Common myeloid progenitor, CD34-positive (primary cell): ENCODE measurements at regions of chr15 and their contacts with region 1.

Region 1: DNA sequence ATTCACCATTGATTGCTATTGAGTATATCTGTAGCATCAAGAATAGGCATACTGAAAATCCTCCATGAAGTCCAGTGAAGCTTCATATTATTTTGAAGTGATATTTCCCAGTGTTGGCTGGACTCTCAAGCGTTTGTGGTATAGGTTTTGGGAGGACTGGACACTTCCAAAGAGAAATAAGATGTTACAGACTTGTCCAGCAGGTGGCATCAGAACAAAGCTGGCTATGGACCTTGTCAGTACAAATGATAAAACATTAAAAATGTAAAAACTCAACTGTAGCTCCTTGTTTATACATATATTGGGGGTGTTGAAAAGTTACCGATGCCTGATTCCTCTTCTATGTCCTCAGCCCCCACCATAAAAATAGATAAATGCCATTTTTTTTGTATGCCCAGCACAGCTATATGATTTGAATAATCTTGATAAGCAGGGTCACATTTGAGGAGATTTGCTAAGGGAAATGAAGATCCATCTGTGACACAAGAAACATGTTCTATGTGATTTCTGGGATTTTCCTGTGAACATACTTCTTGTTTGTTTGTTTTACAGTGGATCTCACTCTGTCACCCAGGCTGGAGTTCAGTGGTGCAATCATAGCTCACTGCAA is 54.5 kb upstream of the GOLGA6B start:
- DNase-seq: peak; percentile 44 to 64 (median 50)
- H3K4me3 ChIP-seq: no peak overlapping the region
- H3K27ac ChIP-seq: no peak overlapping the region
- H3K4me1 ChIP-seq: no peaks in the 10 kb centered on the region
- H3K27me3 ChIP-seq: peaks cover 0 to 2% (median 0%) of the 10 kb centered on the region in 5 experiments

Region 2: DNA sequence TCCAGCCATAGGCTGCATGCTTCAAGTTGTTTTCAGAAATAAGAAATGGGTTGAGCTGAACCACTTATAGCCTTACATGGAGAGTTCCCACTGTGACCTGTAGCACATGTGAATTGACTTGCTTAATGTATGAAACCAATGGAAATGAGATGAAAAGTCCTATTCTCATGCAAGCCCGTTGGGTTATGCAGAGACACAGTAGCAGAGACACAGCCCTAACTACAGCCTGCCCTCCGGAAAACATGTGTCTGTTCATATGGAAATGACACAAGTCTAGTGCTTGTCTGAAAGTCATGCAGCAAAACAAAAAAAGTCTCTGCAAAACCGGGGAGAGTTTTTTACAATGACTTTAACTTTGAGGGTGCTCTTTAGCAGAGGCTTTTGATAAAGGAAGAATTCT is 71.6 kb after region 1 on chr15:
- CTCF ChIA-PET with region 1: interaction called, 10 read pairs
- POLR2A ChIA-PET with region 1: no interaction called
- DNase-seq: no peak
- H3K4me3 ChIP-seq: no peak overlapping the region
- H3K27ac ChIP-seq: no peak overlapping the region
- H3K4me1 ChIP-seq: peaks cover 0 to 11% (median 4%) of the 10 kb centered on the region in 4 experiments
- H3K27me3 ChIP-seq: peaks cover 0 to 7% (median 0%) of the 10 kb centered on the region in 5 experiments

Region 3: DNA sequence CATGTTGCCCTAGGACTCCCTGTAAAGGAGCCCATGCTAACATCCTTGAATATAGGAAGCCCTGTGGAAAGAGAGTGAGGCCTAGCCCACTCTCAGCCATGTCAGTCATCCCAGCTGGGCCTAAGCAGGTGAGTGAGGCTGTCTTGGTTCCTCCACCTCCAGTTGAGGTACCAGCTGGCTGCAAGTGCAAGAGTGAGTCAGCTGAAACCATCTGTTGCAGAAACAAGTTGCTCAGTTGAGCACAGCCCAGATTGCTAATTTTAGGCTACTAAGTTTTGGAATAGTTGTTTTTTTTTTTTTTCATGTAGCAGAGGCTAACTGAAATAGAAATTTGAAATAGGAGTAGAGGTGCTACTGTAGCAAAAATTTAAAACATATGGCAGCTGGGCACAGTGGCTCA is 227.3 kb after region 1 on chr15:
- CTCF ChIA-PET with region 1: no interaction called
- POLR2A ChIA-PET with region 1: no interaction called
- DNase-seq: no peak
- H3K4me3 ChIP-seq: no peak overlapping the region
- H3K27ac ChIP-seq: no peak overlapping the region
- H3K4me1 ChIP-seq: no peaks in the 10 kb centered on the region
- H3K27me3 ChIP-seq: peaks cover 0 to 17% (median 13%) of the 10 kb centered on the region in 5 experiments